Adrenal gland (tissue), 19 donors: ENCODE measurements at regions of chr12 and their contacts with region 1.

Region 1: GRCh38 chr12:3299929-3300832 is 190.8 kb upstream of the PRMT8 start:
- DNase-seq: peak; percentile 79 to 95 (median 91)
- H3K4me3 ChIP-seq: peak overlapping the region in 1 of 4 donors; percentile 25
- H3K27ac ChIP-seq: peak overlapping the region in 1 of 5 donors; percentile 65
- H3K4me1 ChIP-seq: peaks cover 0 to 5% of the 10 kb centered on the region in 2 donors
- H3K27me3 ChIP-seq: no peaks in the 10 kb centered on the region
- CTCF ChIP-seq: peak; percentile 80 to 92 (median 86)
- POLR2A ChIP-seq: no peak

Region 2: GRCh38 chr12:3218228-3219171 is 81.7 kb before region 1 on chr12:
- intact Hi-C with region 1: no loop called
- DNase-seq: peak; percentile 35 to 93 (median 76)
- H3K4me3 ChIP-seq: no peak overlapping the region
- H3K27ac ChIP-seq: peak overlapping the region in 2 of 5 donors; percentile 27 to 72
- H3K4me1 ChIP-seq: peaks cover 12% of the 10 kb centered on the region in 2 donors
- H3K27me3 ChIP-seq: no peaks in the 10 kb centered on the region
- CTCF ChIP-seq: no peak
- POLR2A ChIP-seq: no peak

Region 3: DNA sequence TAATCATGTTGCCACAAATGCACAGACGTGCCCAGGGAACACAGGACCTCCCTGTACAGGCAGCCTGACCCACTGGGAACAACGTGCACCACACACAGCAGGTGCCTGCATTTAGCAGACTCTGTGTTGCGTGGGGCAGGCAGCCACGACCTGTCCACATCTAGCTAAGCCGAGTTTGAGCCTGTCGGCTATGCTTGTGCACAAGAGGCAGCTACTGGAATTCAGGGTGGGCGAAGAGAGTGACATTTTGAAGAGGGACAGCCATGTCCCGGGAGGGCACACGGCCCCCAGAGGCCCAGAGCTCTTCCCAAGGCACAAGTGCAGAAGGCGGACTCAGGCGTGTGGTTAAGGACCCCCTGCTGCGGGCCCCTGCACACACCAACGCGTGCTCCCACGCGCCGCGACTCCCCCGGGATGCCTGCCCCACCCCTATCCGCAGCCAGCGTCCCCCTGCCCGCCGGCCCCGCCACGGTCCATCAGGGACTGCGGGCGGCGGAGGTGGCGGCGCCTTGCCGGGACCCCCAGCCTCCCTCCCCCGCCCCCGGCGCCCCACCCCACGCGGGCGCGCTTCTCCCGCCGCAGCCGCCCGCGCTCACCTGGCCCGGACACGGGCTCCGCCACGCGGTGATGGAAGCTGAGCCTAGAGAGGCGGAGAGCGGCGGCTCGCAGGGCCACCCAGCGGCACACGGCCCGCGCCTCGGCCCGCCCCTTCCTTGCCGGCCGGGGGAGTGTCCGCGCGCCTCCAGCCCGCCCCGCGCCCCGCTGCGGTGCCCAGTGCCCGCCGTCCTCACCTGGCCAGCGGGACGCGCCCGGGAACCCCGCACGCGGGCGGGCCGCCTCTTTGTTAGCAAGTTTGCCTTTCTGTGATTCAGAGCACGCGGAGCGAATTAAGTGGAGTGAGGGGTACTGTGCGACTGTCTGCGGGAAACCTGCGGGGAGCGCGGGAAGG is 65.6 kb after region 1 on chr12:
- intact Hi-C with region 1: no loop called
- DNase-seq: peak in 3 of 7 donors; percentile 12 to 39 (median 20)
- H3K4me3 ChIP-seq: peak overlapping the region in 1 of 4 donors; percentile 54
- H3K27ac ChIP-seq: no peak overlapping the region
- H3K4me1 ChIP-seq: no peaks in the 10 kb centered on the region
- H3K27me3 ChIP-seq: peaks cover 36% of the 10 kb centered on the region
- CTCF ChIP-seq: no peak
- POLR2A ChIP-seq: no peak

Region 4: GRCh38 chr12:3777206-3777809 is 477.1 kb after region 1 on chr12:
- intact Hi-C with region 1: loop called (anchors 5 kb)
- DNase-seq: peak in 1 of 7 donors; percentile 10
- H3K4me3 ChIP-seq: no peak overlapping the region
- H3K27ac ChIP-seq: no peak overlapping the region
- H3K4me1 ChIP-seq: no peaks in the 10 kb centered on the region
- H3K27me3 ChIP-seq: no peaks in the 10 kb centered on the region
- CTCF ChIP-seq: peak; percentile 32 to 63 (median 55)
- POLR2A ChIP-seq: no peak

Region 5: GRCh38 chr12:3803865-3804472 is 503.8 kb after region 1 on chr12:
- intact Hi-C with region 1: loop called (anchors 5 to 10 kb)
- DNase-seq: peak; percentile 73 to 88 (median 81)
- H3K4me3 ChIP-seq: no peak overlapping the region
- H3K27ac ChIP-seq: no peak overlapping the region
- H3K4me1 ChIP-seq: peaks cover 4 to 20% of the 10 kb centered on the region in 2 donors
- H3K27me3 ChIP-seq: no peaks in the 10 kb centered on the region
- CTCF ChIP-seq: peak; percentile 64 to 81 (median 72)
- POLR2A ChIP-seq: no peak